ENCODE measurements at regions of chr20 and their contacts with region 1.

Region 1: GRCh38 chr20:2840138-2840966 is at the starts of genes PCED1A and VPS16:
- DNase-seq: peak; percentile 94
- ATAC-seq: peak; percentile 99
- H3K4me3 Mint-ChIP-seq: peak within 1 kb of the TSS; percentile 76
- H3K27ac Mint-ChIP-seq: peak within 1 kb of the TSS; percentile 84
- H3K4me1 Mint-ChIP-seq: peaks cover 32% of the 10 kb centered on the region
- H3K27me3 Mint-ChIP-seq: no peaks in the 10 kb centered on the region
- total RNA-seq, gene PCED1A: 29.4 to 35.3 TPM
- total RNA-seq, gene VPS16: 32.3 to 47.6 TPM

Region 2: GRCh38 chr20:2470423-2471193 is 369.7 kb before region 1 on chr20 and contains the start of gene SNRPB:
- CTCF ChIA-PET with region 1: no interaction called
- POLR2A ChIA-PET with region 1: no interaction called
- intact Hi-C with region 1: loop called in 1 of 2 experiments (anchors 1 kb)
- DNase-seq: peak; percentile 98
- ATAC-seq: peak; percentile 99
- H3K4me3 Mint-ChIP-seq: peak within 1 kb of the TSS; percentile 96
- H3K27ac Mint-ChIP-seq: peak within 1 kb of the TSS; percentile 100
- H3K4me1 Mint-ChIP-seq: peaks cover 49% of the 10 kb centered on the region
- H3K27me3 Mint-ChIP-seq: no peaks in the 10 kb centered on the region
- total RNA-seq, gene SNRPB: 348 to 466 TPM

Region 3: GRCh38 chr20:2508631-2509467 is 331.5 kb before region 1 on chr20 and contains the start of gene ZNF343:
- CTCF ChIA-PET with region 1: no interaction called
- POLR2A ChIA-PET with region 1: no interaction called
- intact Hi-C with region 1: loop called in 1 of 2 experiments (anchors 1 kb)
- DNase-seq: peak; percentile 88
- ATAC-seq: peak; percentile 95
- H3K4me3 Mint-ChIP-seq: peak within 1 kb of the TSS; percentile 85
- H3K27ac Mint-ChIP-seq: peak within 1 kb of the TSS; percentile 95
- H3K4me1 Mint-ChIP-seq: peaks cover 8% of the 10 kb centered on the region
- H3K27me3 Mint-ChIP-seq: peaks cover 5% of the 10 kb centered on the region
- total RNA-seq, gene ZNF343: 9.9 to 12.3 TPM

Region 4: GRCh38 chr20:2626853-2627541 is 213.4 kb before region 1 on chr20:
- CTCF ChIA-PET with region 1: no interaction called
- POLR2A ChIA-PET with region 1: no interaction called
- intact Hi-C with region 1: no loop called
- DNase-seq: no peak
- ATAC-seq: no peak
- H3K4me3 Mint-ChIP-seq: no peak overlapping the region
- H3K27ac Mint-ChIP-seq: no peak overlapping the region
- H3K4me1 Mint-ChIP-seq: no peaks in the 10 kb centered on the region
- H3K27me3 Mint-ChIP-seq: peaks cover 17% of the 10 kb centered on the region

Region 5: GRCh38 chr20:2865630-2866029 is 25.3 kb after region 1 on chr20:
- CTCF ChIA-PET with region 1: no interaction called
- POLR2A ChIA-PET with region 1: no interaction called
- intact Hi-C with region 1: no loop called
- DNase-seq: peak; percentile 32
- ATAC-seq: peak; percentile 67
- H3K4me3 Mint-ChIP-seq: no peak overlapping the region
- H3K27ac Mint-ChIP-seq: no peak overlapping the region
- H3K4me1 Mint-ChIP-seq: peaks cover 25% of the 10 kb centered on the region
- H3K27me3 Mint-ChIP-seq: no peaks in the 10 kb centered on the region

Region 6: GRCh38 chr20:2984956-2985661 is 144.8 kb after region 1 on chr20:
- CTCF ChIA-PET with region 1: no interaction called
- POLR2A ChIA-PET with region 1: no interaction called
- intact Hi-C with region 1: loop called in 1 of 2 experiments (anchors 1 kb)
- DNase-seq: peak; percentile 71
- ATAC-seq: no peak
- H3K4me3 Mint-ChIP-seq: no peak overlapping the region
- H3K27ac Mint-ChIP-seq: no peak overlapping the region
- H3K4me1 Mint-ChIP-seq: peaks cover 25% of the 10 kb centered on the region
- H3K27me3 Mint-ChIP-seq: no peaks in the 10 kb centered on the region

Measured in activated CD4-positive, alpha-beta T cell treated with anti-CD3 and anti-CD28 coated beads for 36 hours (primary cell).